Activated CD4-positive, alpha-beta T cell treated with anti-CD3 and anti-CD28 coated beads, Interleukin-2, amount 10 ng/mL, durations not matched to agents 24 days and 14 days (primary cell): ENCODE measurements at regions of chr4 and their contacts with region 1.

Region 1: GRCh38 chr4:36351082-36351666 is 69.8 kb downstream of the DTHD1 start:
- DNase-seq: peak; percentile 92
- H3K4me3 Mint-ChIP-seq: no peak overlapping the region
- H3K27ac Mint-ChIP-seq: no peak overlapping the region
- H3K4me1 Mint-ChIP-seq: peaks cover 34% of the 10 kb centered on the region
- H3K27me3 Mint-ChIP-seq: peaks cover 6% of the 10 kb centered on the region

Region 2: GRCh38 chr4:36244257-36245079 is 106.7 kb before region 1 on chr4 and contains the start of gene ARAP2:
- intact Hi-C with region 1: loop called (anchors 1 kb)
- DNase-seq: peak; percentile 93
- H3K4me3 Mint-ChIP-seq: peak within 1 kb of the TSS; percentile 87
- H3K27ac Mint-ChIP-seq: peak within 1 kb of the TSS; percentile 96
- H3K4me1 Mint-ChIP-seq: peaks cover 38% of the 10 kb centered on the region
- H3K27me3 Mint-ChIP-seq: peaks cover 7% of the 10 kb centered on the region
- total RNA-seq, gene ARAP2: 45.3 and 45.4 TPM in 2 replicates

Region 3: DNA sequence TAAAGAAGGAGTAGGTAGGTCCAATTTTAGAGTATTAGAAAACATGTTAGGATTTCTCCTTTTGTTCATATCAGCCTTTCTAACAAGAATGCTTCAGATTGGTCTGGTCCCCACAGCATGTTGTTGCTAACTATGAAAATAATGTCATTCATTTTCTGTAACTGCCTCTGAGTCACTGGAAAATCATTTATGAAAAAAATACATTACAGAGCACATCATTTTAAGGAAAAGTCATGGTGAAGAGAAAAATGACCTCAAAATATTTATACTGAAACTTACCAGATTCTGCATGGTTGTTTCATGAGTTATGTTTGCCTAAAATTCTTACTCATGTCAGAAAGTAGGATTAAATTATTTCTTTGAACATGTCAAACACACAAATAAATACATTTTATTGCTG is 34.6 kb before region 1 on chr4:
- intact Hi-C with region 1: loop called (anchors 1 kb)
- DNase-seq: no peak
- H3K4me3 Mint-ChIP-seq: no peak overlapping the region
- H3K27ac Mint-ChIP-seq: peak overlapping the region; percentile 67
- H3K4me1 Mint-ChIP-seq: peaks cover 48% of the 10 kb centered on the region
- H3K27me3 Mint-ChIP-seq: no peaks in the 10 kb centered on the region

Region 4: GRCh38 chr4:36332023-36332781 is 19.0 kb before region 1 on chr4:
- intact Hi-C with region 1: loop called (anchors 1 kb)
- DNase-seq: peak; percentile 52
- H3K4me3 Mint-ChIP-seq: no peak overlapping the region
- H3K27ac Mint-ChIP-seq: peak overlapping the region; percentile 74
- H3K4me1 Mint-ChIP-seq: peaks cover 26% of the 10 kb centered on the region
- H3K27me3 Mint-ChIP-seq: no peaks in the 10 kb centered on the region

Region 5: GRCh38 chr4:36386691-36387090 is 35.5 kb after region 1 on chr4:
- intact Hi-C with region 1: no loop called
- DNase-seq: no peak
- H3K4me3 Mint-ChIP-seq: no peak overlapping the region
- H3K27ac Mint-ChIP-seq: no peak overlapping the region
- H3K4me1 Mint-ChIP-seq: peaks cover 20% of the 10 kb centered on the region
- H3K27me3 Mint-ChIP-seq: no peaks in the 10 kb centered on the region

Region 6: GRCh38 chr4:36399762-36400353 is 48.7 kb after region 1 on chr4:
- intact Hi-C with region 1: loop called (anchors 1 kb)
- DNase-seq: peak; percentile 86
- H3K4me3 Mint-ChIP-seq: no peak overlapping the region
- H3K27ac Mint-ChIP-seq: no peak overlapping the region
- H3K4me1 Mint-ChIP-seq: peaks cover 21% of the 10 kb centered on the region
- H3K27me3 Mint-ChIP-seq: peaks cover 10% of the 10 kb centered on the region

Region 7: DNA sequence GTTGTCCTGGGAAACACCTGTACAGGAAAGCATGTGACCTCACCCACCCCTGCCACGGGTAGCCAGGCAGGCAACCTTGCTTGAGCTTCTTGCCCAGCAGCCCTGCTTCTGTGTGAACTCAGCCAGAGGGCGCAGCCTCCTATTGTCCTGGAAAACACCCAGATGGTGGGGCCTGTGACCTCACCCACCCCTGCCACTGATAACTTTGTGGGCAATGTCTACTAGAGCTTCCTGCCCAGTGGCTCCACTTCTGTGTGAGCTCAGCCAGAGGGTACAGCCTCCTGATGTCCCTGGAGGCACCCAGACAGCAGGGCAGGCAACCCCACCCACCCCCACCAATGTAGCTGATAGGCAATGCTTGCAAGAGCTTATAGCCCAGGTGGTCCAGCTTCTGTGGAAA is 76.5 kb after region 1 on chr4:
- intact Hi-C with region 1: no loop called
- DNase-seq: no peak
- H3K4me3 Mint-ChIP-seq: no peak overlapping the region
- H3K27ac Mint-ChIP-seq: no peak overlapping the region
- H3K4me1 Mint-ChIP-seq: no peaks in the 10 kb centered on the region
- H3K27me3 Mint-ChIP-seq: peaks cover 23% of the 10 kb centered on the region